Lower leg skin (tissue), 4 donors: ENCODE measurements at regions of chr17 and their contacts with region 1.

Region 1: DNA sequence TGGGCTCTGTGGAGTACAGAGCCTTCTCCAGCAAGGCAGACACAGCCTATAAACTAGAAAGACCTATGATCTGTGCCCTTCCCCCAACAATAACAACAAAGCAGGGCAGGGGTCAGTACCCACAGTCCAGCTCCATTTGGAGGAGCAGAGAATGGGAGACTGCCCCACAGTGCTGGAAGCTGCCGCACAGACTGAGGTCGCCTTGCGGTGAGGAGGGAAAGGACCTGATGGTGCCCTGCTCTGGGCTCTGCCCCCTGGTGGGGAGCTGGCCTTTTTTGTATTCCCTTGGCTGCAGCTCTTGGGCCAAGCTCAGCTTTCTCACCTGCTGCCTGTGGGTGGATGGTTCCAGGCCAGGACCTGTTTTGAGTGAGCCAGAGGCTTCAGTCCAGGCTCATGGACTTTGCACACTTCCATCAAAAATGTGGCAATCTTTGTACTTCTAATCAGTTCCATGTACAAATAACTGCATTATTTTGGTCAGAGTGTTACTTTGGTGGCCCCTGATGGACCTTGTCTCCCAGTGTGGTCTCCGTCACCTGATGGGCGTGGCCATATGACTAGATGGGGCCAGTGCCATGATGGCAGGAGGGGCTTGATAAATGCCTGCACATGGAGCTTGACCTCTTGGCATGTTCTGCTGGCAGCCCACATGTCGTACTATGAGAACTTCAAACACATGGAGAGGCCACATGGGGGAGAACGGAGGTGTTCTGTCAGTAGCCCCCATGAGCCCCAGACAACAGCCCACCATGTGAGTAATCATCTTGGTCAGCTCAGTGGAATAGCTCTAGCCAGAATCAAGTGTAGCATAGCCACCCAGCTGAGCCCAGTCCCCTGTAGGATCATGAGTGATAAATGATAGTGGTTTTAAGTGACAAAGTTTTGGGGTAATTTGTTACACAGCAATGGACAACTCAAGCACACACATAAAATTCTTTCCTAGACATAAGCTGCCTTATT is 24.2 kb downstream of the B9D1 start:
- DNase-seq: peak in 1 of 2 donors; percentile 85
- H3K4me3 ChIP-seq: no peak overlapping the region
- CTCF ChIP-seq: peak in 1 of 3 donors; percentile 62
- POLR2A ChIP-seq: no peak

Region 2: DNA sequence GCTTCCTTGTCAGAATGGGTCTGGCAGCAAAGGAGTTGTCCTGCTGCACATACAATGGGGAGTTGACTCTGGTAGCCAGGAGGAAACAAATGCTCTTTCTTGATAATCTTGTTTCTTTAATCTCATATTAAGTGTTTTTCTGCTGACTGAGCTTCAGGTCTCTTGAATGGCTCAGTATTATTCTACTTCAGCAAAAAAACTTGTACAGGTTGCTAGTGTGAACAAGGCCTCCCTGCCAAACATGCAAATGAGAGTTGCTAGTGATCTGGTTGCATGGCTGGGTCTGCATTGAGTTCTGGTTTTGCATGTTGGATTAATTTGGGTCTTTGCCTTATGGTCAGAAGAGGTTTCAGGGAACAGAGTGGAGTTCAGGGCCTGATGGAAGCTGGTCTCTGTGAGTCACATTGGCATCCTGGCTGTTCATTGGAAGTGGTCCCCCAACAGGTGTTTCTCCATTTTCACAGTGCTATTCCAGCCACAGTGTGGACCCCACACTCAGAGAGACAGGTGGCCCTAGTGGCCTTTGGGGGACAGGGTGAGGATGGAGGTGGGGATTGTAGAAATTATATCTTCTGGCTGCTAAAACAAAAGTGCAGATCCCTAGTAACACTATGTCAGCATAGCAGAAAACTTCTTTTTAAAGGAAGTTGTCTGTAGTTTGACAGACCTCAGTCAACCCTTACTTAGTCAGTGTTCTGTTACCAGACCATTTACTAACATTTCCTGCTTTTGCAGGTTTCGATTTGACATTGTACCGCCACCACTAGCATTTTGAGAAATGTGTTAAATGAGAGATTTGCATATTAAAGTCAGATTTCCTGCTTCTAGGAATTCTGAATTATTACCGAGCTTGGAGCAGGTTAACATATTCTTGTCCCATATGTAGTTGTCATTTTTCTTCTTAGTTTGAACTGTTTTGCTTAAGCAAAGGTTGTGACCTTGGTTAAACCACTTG is 54.0 kb before region 1 on chr17:
- intact Hi-C with region 1: loop called (anchors 10 kb)
- DNase-seq: no peak
- H3K4me3 ChIP-seq: no peak overlapping the region
- CTCF ChIP-seq: no peak
- POLR2A ChIP-seq: no peak